Right ventricle myocardium superior (tissue), 1 donor: ENCODE measurements at regions of chr7 and their contacts with region 1.

Region 1: GRCh38 chr7:35823440-35823839 is 22.6 kb downstream of the SEPTIN7 start:
- DNase-seq: no peak
- ATAC-seq: peak; percentile 16

Region 2: DNA sequence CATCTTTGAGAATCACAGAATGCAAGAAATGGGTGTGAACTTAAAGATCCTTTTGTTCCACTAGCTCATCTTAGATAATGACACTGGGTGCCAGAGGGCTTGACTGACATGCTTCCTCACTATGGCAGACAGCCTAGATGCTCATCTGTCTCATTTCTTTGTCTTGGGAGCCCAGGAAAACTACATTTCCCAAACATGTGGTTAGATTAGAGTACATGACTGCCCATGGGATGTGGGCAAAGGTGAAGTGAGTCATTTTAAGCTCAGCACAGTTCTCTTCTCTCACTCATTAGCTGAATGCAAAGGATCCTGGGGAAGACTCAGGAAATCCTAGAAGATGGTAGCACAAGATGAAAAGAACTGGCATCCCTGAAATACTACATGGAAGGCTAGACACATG is 537.0 kb before region 1 on chr7:
- intact Hi-C with region 1: no loop called
- DNase-seq: no peak
- ATAC-seq: no peak

Region 3: GRCh38 chr7:35869810-35870209 is 46.4 kb after region 1 on chr7:
- intact Hi-C with region 1: loop called (anchors 5 kb)
- DNase-seq: no peak
- ATAC-seq: peak; percentile 51